ENCODE measurements at regions of chr1 and their contacts with region 1.

Region 1: GRCh38 chr1:67685067-67685557 is at the start of gene GADD45A:
- DNase-seq: peak; percentile 97 to 100
- H3K4me3 ChIP-seq: peak within 1 kb of the TSS; percentile 92 to 94
- H3K27ac ChIP-seq: peak within 1 kb of the TSS; percentile 96 to 99
- H3K4me1 ChIP-seq: peaks cover 3 to 20% of the 10 kb centered on the region in 2 donors
- H3K27me3 ChIP-seq: no peaks in the 10 kb centered on the region
- CTCF ChIP-seq: peak in 1 of 3 experiments; percentile 1
- total RNA-seq, gene GADD45A: 111 TPM

Region 2: GRCh38 chr1:67430352-67431155 is 254.6 kb before region 1 on chr1 and contains the start of gene SERBP1:
- intact Hi-C with region 1: loop called (anchors 5 kb)
- DNase-seq: peak; percentile 88 to 98
- H3K4me3 ChIP-seq: peak within 1 kb of the TSS; percentile 83 to 88
- H3K27ac ChIP-seq: peak within 1 kb of the TSS; percentile 94 to 98
- H3K4me1 ChIP-seq: peaks cover 0 to 31% of the 10 kb centered on the region in 2 donors
- H3K27me3 ChIP-seq: no peaks in the 10 kb centered on the region
- CTCF ChIP-seq: no peak
- total RNA-seq, gene SERBP1: 125 TPM

Region 3: DNA sequence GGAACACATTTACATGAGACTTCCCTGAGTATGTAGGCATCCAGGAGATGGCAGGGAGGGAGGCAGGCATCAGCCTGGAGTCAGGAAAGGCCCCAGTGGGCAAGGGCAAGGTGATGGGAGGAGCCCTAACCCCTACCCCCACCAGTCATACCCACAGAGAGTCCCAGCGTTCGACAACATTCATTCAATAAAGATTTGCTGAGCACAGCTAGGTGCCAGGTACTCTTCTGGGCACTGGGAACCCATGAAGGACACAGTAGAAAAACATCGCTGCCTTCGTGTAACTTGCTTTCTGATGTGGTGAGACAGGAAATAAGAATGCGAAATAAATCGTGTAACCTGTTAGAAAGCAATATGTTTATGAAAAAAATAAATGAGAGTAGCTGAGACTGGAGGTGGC is 77.4 kb before region 1 on chr1:
- intact Hi-C with region 1: no loop called
- DNase-seq: no peak
- H3K4me3 ChIP-seq: no peak overlapping the region
- H3K27ac ChIP-seq: no peak overlapping the region
- H3K4me1 ChIP-seq: peaks cover 0 to 3% of the 10 kb centered on the region in 2 donors
- H3K27me3 ChIP-seq: no peaks in the 10 kb centered on the region
- CTCF ChIP-seq: no peak

Region 4: GRCh38 chr1:67618285-67619018 is 66.7 kb before region 1 on chr1:
- intact Hi-C with region 1: loop called (anchors 2 kb)
- DNase-seq: peak; percentile 44 to 90
- H3K4me3 ChIP-seq: peak overlapping the region; percentile 10 to 45
- H3K27ac ChIP-seq: peak overlapping the region; percentile 80 to 82
- H3K4me1 ChIP-seq: peaks cover 2 to 14% of the 10 kb centered on the region in 2 donors
- H3K27me3 ChIP-seq: no peaks in the 10 kb centered on the region
- CTCF ChIP-seq: no peak

Region 5: GRCh38 chr1:67710417-67710816 is 25.3 kb after region 1 on chr1:
- intact Hi-C with region 1: loop called (anchors 1 kb)
- DNase-seq: peak; percentile 15 to 86
- H3K4me3 ChIP-seq: no peak overlapping the region
- H3K27ac ChIP-seq: peak overlapping the region; percentile 67 to 80
- H3K4me1 ChIP-seq: peaks cover 30 to 76% of the 10 kb centered on the region in 2 donors
- H3K27me3 ChIP-seq: no peaks in the 10 kb centered on the region
- CTCF ChIP-seq: no peak

Region 6: DNA sequence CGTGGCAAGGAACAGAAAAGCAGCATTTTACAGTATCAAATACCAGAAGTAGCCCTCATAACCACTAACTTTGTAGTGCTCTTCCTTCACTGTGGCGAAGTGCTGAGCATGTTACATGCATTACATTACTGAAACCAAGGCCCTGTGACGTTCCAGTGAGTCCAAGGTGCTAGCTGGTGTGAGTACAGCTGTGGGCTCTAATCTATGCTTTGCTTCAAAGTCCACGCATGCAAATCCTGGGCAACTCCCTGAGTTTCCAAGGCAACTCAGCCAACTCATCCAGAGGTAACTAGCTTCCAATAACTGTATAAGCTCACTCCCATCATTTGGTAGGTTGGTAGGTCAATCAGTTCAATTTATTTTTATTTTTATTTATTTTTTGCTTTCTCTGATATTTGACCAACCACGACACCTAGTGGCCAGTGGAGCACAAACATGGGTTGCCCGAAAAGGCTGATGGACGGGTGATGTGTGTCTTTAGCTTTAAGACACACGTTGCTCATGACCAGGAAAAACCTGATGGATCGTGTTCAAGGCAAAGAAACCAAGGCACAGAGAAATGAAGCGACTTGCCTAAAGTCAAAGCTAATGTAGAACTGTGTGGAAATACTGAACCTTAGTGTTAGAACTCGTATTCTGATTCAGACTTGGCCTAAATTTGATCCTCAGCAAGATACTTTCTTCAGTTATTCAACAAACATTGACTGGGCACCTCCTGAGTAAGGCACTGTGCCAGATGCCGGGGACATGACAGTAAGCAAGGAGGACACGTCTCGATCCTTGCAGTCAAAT is 75.1 kb after region 1 on chr1:
- intact Hi-C with region 1: loop called (anchors 2 kb)
- DNase-seq: peak in 1 of 2 donors; percentile 84
- H3K4me3 ChIP-seq: no peak overlapping the region
- H3K27ac ChIP-seq: peak overlapping the region; percentile 78 to 82
- H3K4me1 ChIP-seq: peaks cover 6 to 38% of the 10 kb centered on the region in 2 donors
- H3K27me3 ChIP-seq: no peaks in the 10 kb centered on the region
- CTCF ChIP-seq: peak; percentile 73 to 83 (median 81)

Region 7: DNA sequence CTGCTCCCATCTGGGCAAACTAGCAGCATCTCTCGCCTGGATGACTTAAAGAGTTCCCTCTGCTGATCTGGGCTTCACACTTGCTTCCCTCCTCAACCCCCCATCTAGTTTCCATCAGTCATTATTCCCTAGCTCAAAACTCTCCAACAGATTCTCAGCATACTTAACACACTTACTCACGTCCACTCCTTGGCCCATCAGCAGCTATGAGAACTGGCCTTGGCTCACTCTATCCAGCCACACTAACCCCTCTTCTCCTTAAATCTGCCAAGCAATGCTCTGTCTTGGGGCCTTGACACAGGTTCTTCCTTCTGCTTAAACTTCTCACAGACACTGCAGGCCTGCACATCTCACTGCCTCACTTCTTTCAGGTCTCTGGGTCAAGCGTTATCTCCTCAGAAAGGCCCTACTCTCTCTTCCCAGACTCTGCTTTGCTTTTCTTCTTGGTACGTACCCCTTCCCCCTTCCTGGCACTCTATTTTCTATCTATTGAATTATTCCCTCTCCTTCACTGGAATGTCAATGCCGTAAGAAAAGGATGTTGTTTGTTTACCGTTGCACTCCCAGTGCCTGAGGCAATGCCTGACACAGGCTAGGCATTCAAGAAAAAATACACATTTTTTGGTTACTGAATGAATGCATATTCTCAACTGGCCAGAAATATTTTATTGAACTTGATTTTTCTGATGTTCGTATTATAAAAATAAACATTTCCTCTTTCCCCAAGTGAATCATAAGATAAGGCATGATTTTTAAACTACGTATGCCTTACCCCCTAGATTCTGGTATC is 106.8 kb after region 1 on chr1:
- intact Hi-C with region 1: no loop called
- DNase-seq: peak in 1 of 2 donors; percentile 77
- H3K4me3 ChIP-seq: no peak overlapping the region
- H3K27ac ChIP-seq: peak overlapping the region; percentile 77 to 80
- H3K4me1 ChIP-seq: peaks cover 20 to 78% of the 10 kb centered on the region in 2 donors
- H3K27me3 ChIP-seq: no peaks in the 10 kb centered on the region
- CTCF ChIP-seq: no peak

Region 8: GRCh38 chr1:68232354-68233148 is 547.4 kb after region 1 on chr1 and contains the start of gene WLS:
- intact Hi-C with region 1: loop called (anchors 10 kb)
- DNase-seq: peak; percentile 10 to 89
- H3K4me3 ChIP-seq: peak within 1 kb of the TSS; percentile 73 to 80
- H3K27ac ChIP-seq: peak within 1 kb of the TSS; percentile 78 to 89
- H3K4me1 ChIP-seq: peaks cover 0 to 13% of the 10 kb centered on the region in 2 donors
- H3K27me3 ChIP-seq: no peaks in the 10 kb centered on the region
- CTCF ChIP-seq: no peak
- total RNA-seq, gene WLS: 29.9 TPM